ENCODE measurements at regions of chr19 and their contacts with region 1.

Region 1: DNA sequence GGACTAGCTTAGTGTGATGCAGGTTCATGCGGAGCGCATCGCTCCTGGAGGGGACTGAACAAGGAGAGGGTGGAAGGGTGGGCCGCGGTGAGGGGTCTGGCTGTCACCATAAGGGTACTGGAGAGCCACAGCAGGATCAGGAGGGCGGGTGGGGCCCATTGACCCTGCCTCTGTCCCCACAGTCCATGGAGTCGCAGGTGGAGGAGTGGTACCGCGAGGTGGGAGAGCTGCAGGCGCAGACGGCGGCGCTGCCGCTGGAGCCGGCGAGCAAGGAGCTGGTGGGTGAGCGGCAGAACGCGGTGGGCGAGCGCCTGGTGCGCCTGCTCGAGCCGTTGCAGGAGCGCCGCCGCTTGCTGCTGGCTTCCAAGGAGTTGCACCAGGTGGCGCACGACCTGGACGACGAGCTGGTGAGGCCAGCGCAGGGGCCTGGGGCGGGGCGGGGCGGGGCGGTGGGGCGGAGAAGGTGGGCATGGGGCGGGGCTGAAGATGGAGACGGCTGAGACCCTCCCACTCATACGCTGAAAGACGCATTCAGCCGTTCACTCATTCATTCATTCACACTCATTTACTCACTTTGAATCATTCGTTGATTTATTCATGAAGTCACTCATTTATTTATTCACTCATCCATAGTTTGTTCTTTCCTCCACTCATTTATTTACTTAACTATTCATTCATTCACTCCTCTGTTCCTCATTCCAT is 27.5 kb upstream of the SHKBP1 start:
- DNase-seq: peak; percentile 63
- ATAC-seq: peak; percentile 98
- H3K4me3 ChIP-seq: peak overlapping the region; percentile 26 to 45
- H3K27ac ChIP-seq: no peak overlapping the region
- H3K4me1 ChIP-seq: peaks cover 4 to 11% of the 10 kb centered on the region in 2 experiments
- H3K27me3 ChIP-seq: no peaks in the 10 kb centered on the region
- CTCF ChIP-seq: peak; percentile 43 to 64 (median 59)
- POLR2A ChIP-seq: no peak
- RAD21 ChIP-seq: peak; percentile 57

Region 2: DNA sequence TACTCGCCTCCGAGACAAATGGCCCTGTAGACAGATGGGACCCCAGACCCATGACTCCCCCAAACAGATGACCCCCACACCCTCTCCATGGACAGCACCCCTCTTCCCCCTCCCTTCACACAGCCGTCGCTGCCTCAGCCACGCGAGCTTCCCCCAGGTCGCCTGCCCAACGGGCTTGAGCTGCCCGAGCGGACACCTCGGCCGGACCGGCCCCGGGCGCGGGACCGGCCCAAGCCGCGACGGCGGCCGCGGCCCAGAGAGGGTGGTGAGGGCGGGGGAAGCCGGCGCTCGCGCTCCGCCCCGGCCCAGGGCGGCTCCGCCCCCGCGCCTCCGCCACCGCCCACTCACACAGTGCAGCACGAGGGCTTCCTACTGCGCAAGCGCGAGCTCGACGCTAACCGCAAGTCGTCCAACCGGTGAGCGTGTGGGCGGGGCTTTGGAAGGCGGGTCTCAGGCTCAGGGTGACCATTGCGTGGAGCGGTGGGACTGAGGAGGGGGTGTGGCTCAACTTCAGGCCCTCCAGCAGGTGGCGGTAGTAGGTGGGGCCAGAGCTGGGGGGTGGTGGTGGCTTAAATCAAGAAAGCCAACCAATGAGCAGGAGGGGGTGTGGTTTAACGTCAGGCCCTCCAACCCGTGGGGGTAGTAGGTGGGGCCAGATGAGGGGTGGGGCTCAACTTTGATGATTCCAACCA is 21.3 kb after region 1 on chr19:
- CTCF ChIA-PET with region 1: interaction called, 13 read pairs
- POLR2A ChIA-PET with region 1: interaction called, 11 read pairs
- RAD21 ChIA-PET with region 1: interaction called in 1 of 2 experiments, 5 read pairs
- intact Hi-C with region 1: no loop called
- DNase-seq: peak; percentile 99
- ATAC-seq: peak; percentile 93
- H3K4me3 ChIP-seq: peak overlapping the region; percentile 52 to 62
- H3K27ac ChIP-seq: peak overlapping the region; percentile 81
- H3K4me1 ChIP-seq: peaks cover 6 to 23% of the 10 kb centered on the region in 2 experiments
- H3K27me3 ChIP-seq: no peaks in the 10 kb centered on the region
- CTCF ChIP-seq: no peak
- POLR2A ChIP-seq: no peak
- RAD21 ChIP-seq: no peak

Region 3: DNA sequence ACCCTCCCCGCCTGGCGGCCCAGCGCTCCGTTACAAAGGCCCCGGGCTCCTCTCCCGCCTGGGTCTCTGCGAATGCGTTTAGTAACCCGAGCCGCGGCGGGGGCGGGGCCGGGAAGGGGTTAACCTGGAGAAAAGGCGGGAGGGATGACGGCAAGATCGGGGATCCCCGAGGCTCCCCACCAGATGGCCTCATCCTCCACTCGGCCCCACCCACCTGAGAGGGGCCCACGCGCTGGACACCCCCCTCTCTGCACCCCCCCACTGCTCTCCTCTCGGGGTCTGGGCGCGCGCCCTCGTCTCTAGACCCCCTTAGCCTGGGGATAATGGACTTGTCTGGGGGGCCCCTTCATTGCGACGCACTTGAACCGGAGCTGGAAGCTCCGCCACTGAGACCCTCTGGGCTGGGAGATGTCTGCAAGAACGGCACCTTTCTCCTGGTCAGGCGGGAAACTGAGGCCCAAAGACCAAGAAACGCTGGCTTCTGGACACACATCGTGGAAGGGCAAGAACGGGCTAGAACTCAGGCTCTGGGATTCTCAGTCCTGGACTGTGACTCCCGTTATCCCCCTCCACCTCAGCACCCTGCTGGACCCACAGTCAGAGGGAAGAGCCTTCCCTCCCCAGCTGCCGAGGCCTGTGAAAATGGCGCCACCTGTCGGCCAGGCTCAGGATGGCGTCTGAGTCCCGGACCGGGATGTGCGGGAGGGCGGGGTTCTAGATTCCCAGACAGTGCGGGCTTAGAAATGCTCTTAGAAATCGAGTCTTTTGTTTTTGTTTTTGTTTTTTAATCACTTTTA is 49.2 kb after region 1 on chr19:
- CTCF ChIA-PET with region 1: interaction called, 27 read pairs
- POLR2A ChIA-PET with region 1: interaction called, 3 read pairs
- RAD21 ChIA-PET with region 1: interaction called, 3 read pairs
- intact Hi-C with region 1: loop called (anchors 1 kb)
- DNase-seq: peak; percentile 86
- ATAC-seq: peak; percentile 57
- H3K4me3 ChIP-seq: peak overlapping the region; percentile 74 to 82
- H3K27ac ChIP-seq: peak overlapping the region; percentile 63
- H3K4me1 ChIP-seq: peaks cover 27 to 73% of the 10 kb centered on the region in 2 experiments
- H3K27me3 ChIP-seq: no peaks in the 10 kb centered on the region
- CTCF ChIP-seq: peak in 2 of 3 experiments; percentile 97; a peak in 4 of 6 replicates
- POLR2A ChIP-seq: peak; percentile 63
- RAD21 ChIP-seq: no peak

Region 4: DNA sequence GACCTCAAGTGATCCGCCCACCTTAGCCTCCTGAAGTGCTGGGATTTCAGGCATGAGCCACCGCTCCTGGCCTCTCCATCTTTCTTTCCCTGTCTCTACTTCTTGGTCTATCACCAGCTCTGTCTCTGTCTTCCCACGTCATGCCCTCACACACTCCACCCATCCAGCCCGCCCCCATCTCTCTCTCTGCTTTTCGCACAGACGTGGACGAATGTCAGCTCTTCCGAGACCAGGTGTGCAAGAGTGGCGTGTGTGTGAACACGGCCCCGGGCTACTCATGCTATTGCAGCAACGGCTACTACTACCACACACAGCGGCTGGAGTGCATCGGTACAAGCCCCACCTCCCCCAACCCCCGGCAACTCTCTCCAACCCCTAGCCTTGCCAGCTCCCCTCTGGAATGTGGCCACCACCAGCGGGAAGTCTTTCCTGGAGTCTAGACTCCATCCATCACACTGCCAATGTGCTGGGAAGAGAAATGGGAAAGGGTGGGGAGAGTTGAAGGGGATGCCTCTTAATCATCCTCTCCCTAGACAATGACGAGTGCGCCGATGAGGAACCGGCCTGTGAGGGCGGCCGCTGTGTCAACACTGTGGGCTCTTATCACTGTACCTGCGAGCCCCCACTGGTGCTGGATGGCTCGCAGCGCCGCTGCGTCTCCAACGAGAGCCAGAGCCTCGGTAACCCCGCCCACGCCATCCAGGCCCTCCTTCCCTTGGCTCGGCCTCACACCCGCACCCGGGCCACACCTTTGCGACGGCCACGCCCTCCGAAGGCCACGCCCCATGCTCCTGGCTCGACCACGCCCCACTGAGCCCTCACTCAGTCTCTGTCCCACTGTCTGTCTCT is 74.5 kb after region 1 on chr19:
- CTCF ChIA-PET with region 1: no interaction called
- POLR2A ChIA-PET with region 1: no interaction called
- RAD21 ChIA-PET with region 1: no interaction called
- intact Hi-C with region 1: no loop called
- DNase-seq: peak; percentile 80
- ATAC-seq: peak; percentile 96
- H3K4me3 ChIP-seq: no peak overlapping the region
- H3K27ac ChIP-seq: peak overlapping the region; percentile 55
- H3K4me1 ChIP-seq: peaks cover 14 to 20% of the 10 kb centered on the region in 2 experiments
- H3K27me3 ChIP-seq: no peaks in the 10 kb centered on the region
- CTCF ChIP-seq: no peak
- POLR2A ChIP-seq: no peak
- RAD21 ChIP-seq: no peak

Region 5: DNA sequence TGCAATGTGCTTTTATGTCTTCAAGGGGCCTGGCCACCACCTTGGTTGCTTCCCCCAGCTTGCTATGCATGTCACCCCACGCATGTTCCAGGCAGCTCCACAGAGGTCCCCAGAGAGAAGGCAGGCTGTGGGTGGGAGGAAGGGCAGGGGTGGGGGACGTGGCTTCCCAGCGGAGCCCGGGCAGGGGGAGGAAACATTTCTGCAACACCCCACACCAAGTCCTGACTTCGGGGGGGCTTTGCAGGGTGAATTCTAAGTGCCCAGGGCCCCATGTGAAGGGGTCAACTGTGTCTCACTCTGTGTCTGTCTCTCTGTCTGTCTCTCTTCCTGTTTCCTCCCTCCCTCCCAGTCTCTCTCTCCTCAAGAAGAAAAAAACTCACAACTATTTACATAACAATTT is 91.6 kb after region 1 on chr19:
- CTCF ChIA-PET with region 1: interaction called, 9 read pairs
- POLR2A ChIA-PET with region 1: no interaction called
- RAD21 ChIA-PET with region 1: no interaction called
- intact Hi-C with region 1: loop called (anchors 5 kb)
- DNase-seq: no peak
- ATAC-seq: no peak
- H3K4me3 ChIP-seq: no peak overlapping the region
- H3K27ac ChIP-seq: no peak overlapping the region
- H3K4me1 ChIP-seq: peaks cover 20 to 36% of the 10 kb centered on the region in 2 experiments
- H3K27me3 ChIP-seq: no peaks in the 10 kb centered on the region
- CTCF ChIP-seq: no peak
- POLR2A ChIP-seq: no peak
- RAD21 ChIP-seq: no peak

Measured in HCT116 (cell line).